Mammary epithelial cell (primary cell): ENCODE measurements at regions of chr14 and their contacts with region 1.

Region 1: DNA sequence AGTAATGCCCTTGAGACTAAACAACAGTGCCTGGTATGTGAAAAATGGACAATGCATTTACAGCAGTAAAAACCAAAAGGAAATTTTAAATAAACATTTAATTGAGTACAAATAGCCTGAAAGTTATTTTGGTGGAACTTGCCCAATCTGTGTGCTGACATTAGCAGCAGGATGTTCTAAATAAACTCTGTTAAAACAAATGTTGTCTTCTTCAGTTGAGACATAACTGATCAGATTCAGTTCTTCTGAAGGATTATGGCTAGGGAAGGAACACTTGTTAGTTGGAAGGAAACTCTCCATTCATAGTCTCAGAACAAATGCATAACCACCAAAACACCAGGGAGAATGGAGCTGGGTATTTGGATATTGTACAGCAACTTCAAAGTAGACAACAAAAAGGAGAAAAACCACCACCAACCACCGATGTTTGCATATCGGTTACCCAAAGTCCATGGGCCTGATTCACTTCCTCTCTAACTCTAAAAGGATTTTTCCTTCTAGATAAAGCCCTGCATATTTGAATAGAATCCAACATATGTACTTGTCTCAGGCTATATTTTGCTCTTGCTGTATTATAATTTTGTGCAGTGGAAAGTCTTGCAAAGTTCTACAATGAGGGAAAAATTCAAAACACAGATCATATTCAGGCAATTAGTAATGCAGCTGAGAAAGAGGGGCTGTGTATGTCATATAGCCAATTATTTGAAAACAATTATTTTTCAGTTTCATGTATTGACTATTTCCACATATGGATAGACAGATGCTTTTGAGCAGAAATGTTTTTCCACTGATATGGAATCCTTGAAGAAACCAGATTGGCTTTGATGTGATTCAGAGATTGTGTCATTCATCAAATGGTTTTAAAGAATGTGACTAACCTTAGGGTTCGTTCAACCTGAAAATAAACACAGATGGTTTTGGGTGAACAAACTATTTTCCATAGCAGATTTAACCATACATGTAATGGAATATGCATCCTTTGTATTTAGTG is 152.2 kb upstream of the BMP4 start:
- DNase-seq: peak; percentile 75
- H3K4me3 ChIP-seq: no peak overlapping the region
- H3K27ac ChIP-seq: peak overlapping the region; percentile 92
- H3K4me1 ChIP-seq: peaks cover 67% of the 10 kb centered on the region
- H3K27me3 ChIP-seq: no peaks in the 10 kb centered on the region
- CTCF ChIP-seq: no peak

Region 2: GRCh38 chr14:54169254-54169924 is 60.6 kb after region 1 on chr14:
- CTCF ChIA-PET with region 1: no interaction called
- dilution Hi-C with region 1: no loop called
- in situ Hi-C with region 1: no loop called
- intact Hi-C with region 1: loop called (anchors 1 kb)
- DNase-seq: peak; percentile 89
- H3K4me3 ChIP-seq: no peak overlapping the region
- H3K27ac ChIP-seq: peak overlapping the region; percentile 89
- H3K4me1 ChIP-seq: peaks cover 42% of the 10 kb centered on the region
- H3K27me3 ChIP-seq: no peaks in the 10 kb centered on the region
- CTCF ChIP-seq: no peak

Region 3: GRCh38 chr14:54396493-54397335 is 287.9 kb after region 1 on chr14 and contains the start of gene CDKN3:
- CTCF ChIA-PET with region 1: no interaction called
- dilution Hi-C with region 1: no loop called
- in situ Hi-C with region 1: no loop called
- intact Hi-C with region 1: loop called (anchors 5 kb)
- DNase-seq: peak; percentile 100
- H3K4me3 ChIP-seq: peak within 1 kb of the TSS; percentile 63 to 95 (median 75)
- H3K27ac ChIP-seq: peak within 1 kb of the TSS; percentile 61
- H3K4me1 ChIP-seq: peaks cover 9% of the 10 kb centered on the region
- H3K27me3 ChIP-seq: no peaks in the 10 kb centered on the region
- CTCF ChIP-seq: peak in 1 of 2 donors; percentile 45
- total RNA-seq, gene CDKN3: 0.50 to 38.1 TPM